Body of pancreas (tissue), 4 donors: ENCODE measurements at regions of chr1 and their contacts with region 1.

Region 1: DNA sequence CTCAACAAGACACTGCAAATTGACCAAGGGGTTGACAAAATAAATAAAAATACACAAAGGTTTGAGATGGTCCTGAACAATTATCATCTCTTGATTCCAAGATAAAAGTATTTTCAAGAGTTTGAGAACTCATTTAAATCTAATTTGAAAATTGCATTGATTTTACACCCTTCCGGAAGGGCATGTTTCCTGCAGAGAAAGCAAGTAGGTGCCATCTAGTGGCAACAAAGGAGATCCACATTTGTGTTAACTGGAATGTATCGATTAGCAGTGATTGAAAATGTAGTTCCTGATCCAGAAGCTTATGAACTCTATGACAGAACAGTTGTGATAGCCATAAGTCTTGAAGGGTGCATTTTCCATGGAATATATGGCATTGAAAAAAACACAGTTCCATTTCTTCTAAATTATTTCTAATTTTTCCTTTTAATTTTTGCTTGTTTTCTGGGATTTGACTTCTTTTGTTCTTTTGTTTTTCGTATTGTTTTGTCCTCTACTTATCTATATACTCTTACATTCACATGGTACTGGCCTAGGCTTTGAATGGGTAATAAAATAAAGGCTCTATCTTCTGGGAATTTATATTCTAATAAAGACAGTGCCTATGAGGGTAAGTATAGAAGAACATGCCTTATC is 143.7 kb downstream of the DNM3 start:
- DNase-seq: peak in 1 of 4 donors; percentile 36
- ATAC-seq: peak; percentile 64
- H3K4me3 ChIP-seq: no peak overlapping the region
- H3K27ac ChIP-seq: no peak overlapping the region
- H3K4me1 ChIP-seq: no peaks in the 10 kb centered on the region
- H3K27me3 ChIP-seq: no peaks in the 10 kb centered on the region
- CTCF ChIP-seq: peak; percentile 59 to 85 (median 77)
- POLR2A ChIP-seq: no peak

Region 2: DNA sequence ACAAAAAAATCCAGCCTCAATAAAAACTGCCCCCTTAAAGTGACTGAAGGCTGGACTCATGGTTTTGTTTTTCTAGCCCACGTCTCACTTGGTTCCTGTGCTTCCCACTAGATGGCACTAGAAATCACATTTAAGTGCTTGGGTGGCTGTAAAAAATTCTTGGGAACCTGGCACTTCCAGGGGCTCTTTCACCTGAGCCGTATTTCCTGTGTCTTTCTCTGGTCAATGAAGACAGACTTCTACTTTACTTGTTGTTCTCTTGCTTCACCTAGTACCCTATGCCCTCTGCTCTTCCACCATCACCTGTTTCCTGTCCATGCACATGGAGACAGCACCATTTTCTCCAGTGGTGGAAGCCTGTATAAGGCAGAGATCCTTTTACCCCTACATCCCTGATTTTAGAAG is 183.5 kb before region 1 on chr1:
- intact Hi-C with region 1: loop called (anchors 5 kb)
- DNase-seq: peak in 2 of 4 donors; percentile 22 to 24
- ATAC-seq: peak; percentile 52
- H3K4me3 ChIP-seq: no peak overlapping the region
- H3K27ac ChIP-seq: no peak overlapping the region
- H3K4me1 ChIP-seq: no peaks in the 10 kb centered on the region
- H3K27me3 ChIP-seq: no peaks in the 10 kb centered on the region
- CTCF ChIP-seq: peak; percentile 44 to 75 (median 70)
- POLR2A ChIP-seq: no peak

Region 3: GRCh38 chr1:171940373-171940772 is 44.6 kb before region 1 on chr1:
- intact Hi-C with region 1: no loop called
- DNase-seq: no peak
- ATAC-seq: no peak
- H3K4me3 ChIP-seq: no peak overlapping the region
- H3K27ac ChIP-seq: no peak overlapping the region
- H3K4me1 ChIP-seq: no peaks in the 10 kb centered on the region
- H3K27me3 ChIP-seq: no peaks in the 10 kb centered on the region
- CTCF ChIP-seq: no peak
- POLR2A ChIP-seq: no peak

Region 4: DNA sequence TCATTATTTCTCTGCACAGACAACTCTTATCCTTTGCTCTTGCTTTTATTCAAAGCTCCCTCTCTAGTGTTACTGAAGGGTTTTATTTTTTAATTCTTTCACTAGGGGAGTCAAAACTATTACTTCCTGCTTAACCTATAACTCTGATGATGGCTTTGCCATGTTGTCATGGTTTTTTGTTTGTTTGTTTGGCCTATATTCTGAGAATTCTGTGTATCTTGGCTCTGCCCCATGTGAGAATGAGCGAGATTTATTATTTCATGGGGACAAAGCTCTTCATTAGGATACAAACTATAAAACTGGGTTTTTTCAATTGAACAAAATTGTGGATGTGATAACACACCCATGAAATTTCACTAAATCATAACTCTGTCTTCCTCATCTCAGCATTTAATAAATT is 245.0 kb after region 1 on chr1:
- intact Hi-C with region 1: no loop called
- DNase-seq: no peak
- ATAC-seq: no peak
- H3K4me3 ChIP-seq: no peak overlapping the region
- H3K27ac ChIP-seq: no peak overlapping the region
- H3K4me1 ChIP-seq: no peaks in the 10 kb centered on the region
- H3K27me3 ChIP-seq: no peaks in the 10 kb centered on the region
- CTCF ChIP-seq: no peak
- POLR2A ChIP-seq: no peak